Breast epithelium (tissue), 4 donors: ENCODE measurements at regions of chr11 and their contacts with region 1.

Region 1: GRCh38 chr11:123480261-123480815 is 50.3 kb downstream of the GRAMD1B start:
- DNase-seq: no peak
- H3K4me3 ChIP-seq: no peak overlapping the region
- H3K27ac ChIP-seq: no peak overlapping the region
- H3K4me1 ChIP-seq: no peaks in the 10 kb centered on the region
- H3K27me3 ChIP-seq: no peaks in the 10 kb centered on the region
- CTCF ChIP-seq: no peak
- POLR2A ChIP-seq: no peak

Region 2: GRCh38 chr11:123298488-123299447 is 181.6 kb before region 1 on chr11:
- intact Hi-C with region 1: loop called (anchors 10 kb)
- DNase-seq: no peak
- H3K4me3 ChIP-seq: no peak overlapping the region
- H3K27ac ChIP-seq: no peak overlapping the region
- H3K4me1 ChIP-seq: no peaks in the 10 kb centered on the region
- H3K27me3 ChIP-seq: no peaks in the 10 kb centered on the region
- CTCF ChIP-seq: no peak
- POLR2A ChIP-seq: no peak

Region 3: DNA sequence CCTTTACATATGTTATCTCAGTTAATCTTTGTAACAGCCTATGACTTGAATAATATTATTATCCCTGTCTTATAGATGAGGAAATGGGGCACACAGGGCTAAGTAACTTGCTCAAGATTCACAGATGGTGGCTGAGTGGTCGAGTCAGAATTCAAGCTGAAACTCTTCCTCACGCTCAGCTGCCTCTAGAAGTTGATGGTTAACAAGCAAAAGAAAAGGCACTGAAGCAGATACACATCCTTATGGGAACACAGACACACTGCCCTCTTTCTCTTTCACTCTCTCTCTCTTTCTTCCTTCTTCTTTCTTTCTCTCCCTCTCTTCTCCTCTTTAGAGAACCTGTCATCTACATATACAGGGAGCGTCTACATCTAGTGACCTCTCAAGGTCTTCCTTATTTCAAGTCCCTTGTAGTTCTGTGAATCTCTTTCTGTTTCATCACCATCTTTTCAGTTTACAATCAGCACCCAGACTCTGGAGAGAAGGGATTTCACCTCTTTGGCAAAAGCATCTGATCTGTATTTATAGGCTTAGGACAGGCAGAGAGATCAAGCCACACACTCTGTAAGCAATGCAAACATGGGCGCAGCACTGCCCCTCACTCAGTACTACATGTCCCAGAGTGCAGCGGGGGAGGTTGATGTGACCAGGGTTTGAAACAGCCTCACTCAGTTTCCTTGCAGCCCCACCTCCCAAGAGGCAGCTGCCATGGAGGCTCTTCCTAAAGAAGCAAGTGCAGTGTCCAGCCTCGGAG is 25.4 kb after region 1 on chr11:
- intact Hi-C with region 1: no loop called
- DNase-seq: no peak
- H3K4me3 ChIP-seq: no peak overlapping the region
- H3K27ac ChIP-seq: no peak overlapping the region
- H3K4me1 ChIP-seq: no peaks in the 10 kb centered on the region
- H3K27me3 ChIP-seq: no peaks in the 10 kb centered on the region
- CTCF ChIP-seq: no peak
- POLR2A ChIP-seq: no peak